Psoas muscle (tissue), 8 donors: ENCODE measurements at regions of chr12 and their contacts with region 1.

Region 1: DNA sequence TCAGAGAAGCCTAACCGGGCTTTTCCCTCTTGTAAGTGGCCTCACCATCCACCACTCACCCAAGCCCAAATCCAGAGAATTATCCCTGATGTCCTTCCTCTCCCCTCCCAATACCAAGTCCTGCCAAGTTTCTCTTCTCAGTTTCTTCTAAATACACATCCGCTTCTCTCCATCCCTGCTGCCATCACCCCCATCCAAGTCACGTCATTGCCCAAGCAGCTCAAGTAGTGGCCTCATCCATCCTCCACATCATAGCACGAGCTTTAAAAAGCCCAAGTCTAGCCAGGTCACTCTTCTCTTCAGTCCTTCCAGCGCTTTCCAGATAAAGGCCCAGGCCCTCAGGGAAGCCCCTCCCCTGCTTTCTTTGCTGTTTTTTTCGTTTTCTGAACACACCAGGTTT is 25.4 kb downstream of the IL31 start:
- DNase-seq: no peak
- ATAC-seq: peak in 2 of 4 donors; percentile 4 to 16
- H3K4me3 ChIP-seq: no peak overlapping the region
- H3K27ac ChIP-seq: no peak overlapping the region
- H3K4me1 ChIP-seq: no peaks in the 10 kb centered on the region
- H3K27me3 ChIP-seq: no peaks in the 10 kb centered on the region
- CTCF ChIP-seq: no peak

Region 2: GRCh38 chr12:122135437-122136425 is 12.9 kb before region 1 on chr12:
- intact Hi-C with region 1: loop called in 1 of 2 experiments (anchors 1 kb)
- DNase-seq: no peak
- ATAC-seq: no peak
- H3K4me3 ChIP-seq: no peak overlapping the region
- H3K27ac ChIP-seq: no peak overlapping the region
- H3K4me1 ChIP-seq: peaks cover 10% of the 10 kb centered on the region
- H3K27me3 ChIP-seq: no peaks in the 10 kb centered on the region
- CTCF ChIP-seq: no peak

Region 3: DNA sequence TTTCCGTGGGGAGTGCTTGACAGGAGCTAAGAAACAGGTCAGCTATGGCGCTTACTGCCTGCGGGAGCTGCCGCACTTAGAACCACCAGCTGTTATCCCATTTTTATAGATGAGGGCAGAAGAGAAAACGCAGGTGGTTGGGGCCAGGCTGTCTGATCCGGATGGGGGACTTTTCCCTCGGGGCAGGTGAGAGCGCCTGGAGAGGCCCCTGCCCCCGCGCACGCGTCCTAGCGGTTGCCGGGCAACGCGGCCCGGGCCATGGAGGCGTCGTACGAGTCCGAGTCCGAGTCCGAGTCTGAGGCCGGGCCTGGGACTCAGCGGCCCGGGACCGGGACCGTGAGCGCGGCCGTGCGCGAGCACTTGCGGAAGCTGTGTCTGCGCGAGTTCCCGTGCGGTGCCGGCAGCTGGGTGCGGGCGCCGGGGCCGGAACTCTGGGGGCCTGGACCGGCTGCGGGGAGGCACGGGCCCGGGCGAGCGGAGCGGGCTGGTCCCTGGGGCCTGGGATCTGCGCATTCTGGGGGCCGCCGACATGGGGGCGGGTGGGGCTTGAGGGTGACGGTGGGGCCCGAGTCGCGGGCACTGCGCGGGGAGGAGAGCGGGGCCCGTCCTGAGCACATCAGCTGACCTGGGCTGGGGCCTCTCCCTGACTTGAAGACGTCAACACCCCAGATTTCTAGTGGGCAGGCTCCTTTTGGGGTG is 34.4 kb after region 1 on chr12 and contains the start of gene LRRC43:
- intact Hi-C with region 1: no loop called
- DNase-seq: peak in 1 of 2 donors; percentile 34
- ATAC-seq: peak; percentile 28 to 74 (median 52)
- H3K4me3 ChIP-seq: peak within 1 kb of the TSS; percentile 70
- H3K27ac ChIP-seq: no peak within 1 kb of the TSS
- H3K4me1 ChIP-seq: no peaks in the 10 kb centered on the region
- H3K27me3 ChIP-seq: peaks cover 0 to 3% (median 0%) of the 10 kb centered on the region in 3 donors
- CTCF ChIP-seq: no peak
- total RNA-seq, gene LRRC43: 0.13 to 0.36 (median 0.32) TPM in 3 of 4 donors, not detected in the other